ENCODE measurements at regions of chr7 and their contacts with region 1.

Region 1: DNA sequence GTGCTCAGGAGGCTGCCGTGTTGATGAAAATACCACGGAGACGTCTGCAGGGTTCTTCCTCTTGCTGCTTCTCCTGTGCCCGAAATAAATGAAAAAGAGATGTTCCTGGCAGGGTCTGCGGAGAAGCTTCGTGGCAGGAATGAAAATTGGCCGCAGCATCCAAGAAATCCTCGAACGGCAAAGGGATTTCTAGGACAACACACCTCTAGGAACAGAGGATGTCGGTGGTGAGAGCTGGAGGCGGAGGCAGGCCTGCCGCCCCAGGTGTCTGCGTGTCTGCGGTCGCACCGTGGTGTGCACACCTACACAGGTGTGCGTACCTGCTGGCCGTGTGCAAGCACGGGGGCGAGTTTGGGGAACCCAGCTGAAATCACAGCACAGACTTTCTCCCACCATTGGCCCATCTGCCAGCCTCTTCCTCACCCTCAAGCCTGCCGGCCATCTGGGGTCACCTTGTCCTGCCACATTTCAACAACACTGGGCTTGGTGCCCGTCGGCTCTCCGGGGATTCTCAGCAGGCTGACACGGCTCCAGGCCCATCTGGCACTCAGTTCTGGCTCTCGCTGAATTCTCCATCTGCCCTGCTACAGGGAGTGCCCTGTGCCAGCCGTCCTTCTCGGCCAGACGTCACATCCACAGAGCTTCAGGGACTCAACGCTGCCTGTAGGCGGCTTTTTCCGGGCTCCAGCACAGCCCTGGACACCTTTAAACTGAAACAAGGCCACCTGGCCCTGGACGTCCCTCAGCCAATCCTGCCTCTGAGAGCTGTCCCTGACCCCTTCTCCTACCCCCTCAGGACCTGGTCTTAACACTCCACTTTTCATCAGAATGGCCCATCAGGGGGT is 43.2 kb downstream of the TMEM130 start:
- DNase-seq: peak; percentile 88 to 89
- ATAC-seq: peak; percentile 93 to 98 (median 96)
- H3K4me3 ChIP-seq: no peak overlapping the region
- H3K27ac ChIP-seq: peak overlapping the region; percentile 50 to 92 (median 80)
- H3K4me1 ChIP-seq: peaks cover 0 to 22% (median 0%) of the 10 kb centered on the region in 9 donors
- H3K27me3 ChIP-seq: peaks cover 0 to 8% (median 0%) of the 10 kb centered on the region in 7 donors
- CTCF ChIP-seq: peak in 7 of 9 donors; percentile 6 to 54 (median 34)

Region 2: DNA sequence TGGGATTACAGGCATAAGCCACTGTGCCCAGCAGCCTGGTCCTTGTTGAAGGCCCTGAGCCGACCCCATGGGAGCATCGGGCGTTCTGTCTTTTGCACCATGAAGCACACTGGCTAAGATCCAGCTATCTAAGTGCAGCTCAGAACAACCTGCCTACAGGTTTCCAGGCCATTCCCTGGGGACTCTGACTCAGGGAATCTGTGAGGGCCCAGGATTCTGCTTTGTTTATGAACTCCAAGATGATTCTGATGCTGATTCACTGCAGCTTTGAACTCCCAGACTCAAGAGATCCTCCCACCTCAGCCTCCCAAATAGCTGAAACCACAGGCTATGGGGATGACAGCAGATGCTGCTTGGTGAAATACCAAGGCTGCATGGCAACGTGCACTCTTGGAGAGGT is 179.3 kb before region 1 on chr7:
- intact Hi-C with region 1: no loop called
- DNase-seq: no peak
- ATAC-seq: no peak
- H3K4me3 ChIP-seq: no peak overlapping the region
- H3K27ac ChIP-seq: no peak overlapping the region
- H3K4me1 ChIP-seq: no peaks in the 10 kb centered on the region
- H3K27me3 ChIP-seq: peaks cover 0 to 22% (median 0%) of the 10 kb centered on the region in 7 donors
- CTCF ChIP-seq: no peak

Region 3: GRCh38 chr7:98816241-98816640 is 10.4 kb before region 1 on chr7:
- intact Hi-C with region 1: loop called in 1 of 10 experiments (anchors 1 kb)
- DNase-seq: peak; percentile 46 to 72
- ATAC-seq: peak; percentile 93 to 98 (median 96)
- H3K4me3 ChIP-seq: no peak overlapping the region
- H3K27ac ChIP-seq: peak overlapping the region in 9 of 10 donors; percentile 56 to 87 (median 83)
- H3K4me1 ChIP-seq: peaks cover 0 to 20% (median 5%) of the 10 kb centered on the region in 9 donors
- H3K27me3 ChIP-seq: no peaks in the 10 kb centered on the region
- CTCF ChIP-seq: no peak